Activated B cell treated with CpG ODN at 0.5 μM for 24 hours (primary cell): ENCODE measurements at regions of chr9 and their contacts with region 1.

Region 1: DNA sequence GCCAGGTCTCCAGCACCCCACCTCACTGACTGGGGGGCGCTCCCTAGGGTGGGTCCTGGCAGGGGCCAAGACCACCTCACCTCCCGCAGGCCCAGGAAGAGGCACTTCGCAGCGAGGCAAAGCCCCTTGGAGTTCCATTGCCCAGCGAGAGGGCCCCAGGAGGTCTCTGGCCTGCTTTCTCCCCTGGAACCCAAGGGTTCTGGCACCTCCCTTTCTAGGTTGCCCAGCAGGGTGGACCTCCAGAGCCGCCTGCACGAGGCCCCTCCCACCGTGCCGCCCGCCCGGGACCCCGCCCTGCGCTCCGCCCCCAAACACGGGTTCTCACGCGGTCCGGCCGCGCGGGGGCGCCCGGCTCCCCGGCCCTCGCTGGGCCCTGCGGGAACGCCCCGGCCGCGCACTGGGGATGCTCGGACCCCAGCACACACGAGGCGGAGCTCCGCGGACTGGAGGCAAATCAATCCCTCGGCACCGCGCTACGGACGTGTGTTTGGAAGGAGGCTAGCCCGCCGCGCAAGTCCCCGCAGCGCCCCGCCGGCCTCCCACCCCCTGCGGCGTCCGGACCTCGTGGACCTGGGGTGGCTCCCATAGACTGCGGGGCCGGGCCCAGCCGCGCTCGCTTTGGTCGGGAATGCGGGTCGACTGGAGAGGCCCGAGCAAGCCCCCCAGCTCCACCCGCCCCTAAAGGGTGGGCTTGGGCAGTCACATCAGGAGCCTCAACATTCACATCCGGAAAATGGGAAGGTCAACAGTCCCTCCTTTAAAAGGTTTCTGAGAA is 99.5 kb upstream of the LMX1B start:
- DNase-seq: peak; percentile 79
- ATAC-seq: peak; percentile 96
- H3K4me3 Mint-ChIP-seq: no peak overlapping the region
- H3K27ac Mint-ChIP-seq: no peak overlapping the region
- H3K4me1 Mint-ChIP-seq: peaks cover 22% of the 10 kb centered on the region
- H3K27me3 Mint-ChIP-seq: peaks cover 48% of the 10 kb centered on the region
- CTCF ChIP-seq: no peak

Region 2: DNA sequence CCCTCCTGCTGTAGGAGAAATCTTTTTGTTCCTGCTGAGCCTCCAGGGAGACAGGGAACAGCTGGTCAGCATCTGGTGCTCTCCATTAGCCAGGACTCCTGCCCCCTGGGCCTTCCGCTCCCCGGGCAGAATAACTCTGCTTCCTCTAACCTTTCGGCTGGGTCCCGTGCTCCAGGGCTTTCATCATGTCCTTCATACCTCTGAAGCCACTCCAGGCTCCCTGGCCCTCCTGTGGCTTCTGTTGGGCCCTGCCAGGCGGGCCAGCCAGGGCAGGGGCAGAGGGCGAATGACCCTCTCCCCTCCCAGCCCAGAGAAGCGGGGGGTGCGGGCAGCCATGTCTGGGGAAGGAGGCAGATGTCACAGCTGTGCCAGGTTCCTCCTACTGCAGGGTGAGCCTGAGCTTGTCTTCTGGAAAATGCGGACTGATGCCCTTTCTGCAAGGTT is 17.8 kb after region 1 on chr9:
- CTCF ChIA-PET with region 1: interaction called, 8 read pairs
- POLR2A ChIA-PET with region 1: interaction called, 5 read pairs
- intact Hi-C with region 1: loop called (anchors 1 kb)
- DNase-seq: no peak
- ATAC-seq: no peak
- H3K4me3 Mint-ChIP-seq: no peak overlapping the region
- H3K27ac Mint-ChIP-seq: peak overlapping the region; percentile 85
- H3K4me1 Mint-ChIP-seq: peaks cover 49% of the 10 kb centered on the region
- H3K27me3 Mint-ChIP-seq: no peaks in the 10 kb centered on the region
- CTCF ChIP-seq: no peak

Region 3: GRCh38 chr9:126550891-126551351 is 36.7 kb after region 1 on chr9:
- CTCF ChIA-PET with region 1: interaction called, 6 read pairs
- POLR2A ChIA-PET with region 1: interaction called, 12 read pairs
- intact Hi-C with region 1: no loop called
- DNase-seq: no peak
- ATAC-seq: no peak
- H3K4me3 Mint-ChIP-seq: no peak overlapping the region
- H3K27ac Mint-ChIP-seq: no peak overlapping the region
- H3K4me1 Mint-ChIP-seq: no peaks in the 10 kb centered on the region
- H3K27me3 Mint-ChIP-seq: no peaks in the 10 kb centered on the region
- CTCF ChIP-seq: no peak

Region 4: GRCh38 chr9:126558051-126558665 is 43.9 kb after region 1 on chr9:
- CTCF ChIA-PET with region 1: interaction called, 26 read pairs
- POLR2A ChIA-PET with region 1: no interaction called
- intact Hi-C with region 1: loop called (anchors 1 kb)
- DNase-seq: peak; percentile 53
- ATAC-seq: peak; percentile 85
- H3K4me3 Mint-ChIP-seq: no peak overlapping the region
- H3K27ac Mint-ChIP-seq: peak overlapping the region; percentile 62
- H3K4me1 Mint-ChIP-seq: no peaks in the 10 kb centered on the region
- H3K27me3 Mint-ChIP-seq: peaks cover 31% of the 10 kb centered on the region
- CTCF ChIP-seq: no peak